AG04449 (cell line): ENCODE measurements at regions of chr7 and their contacts with region 1.

Region 1: GRCh38 chr7:114865564-114865963 is 56.3 kb upstream of the MDFIC start:
- DNase-seq: no peak
- H3K4me3 ChIP-seq: no peak overlapping the region
- CTCF ChIP-seq: peak; percentile 77

Region 2: DNA sequence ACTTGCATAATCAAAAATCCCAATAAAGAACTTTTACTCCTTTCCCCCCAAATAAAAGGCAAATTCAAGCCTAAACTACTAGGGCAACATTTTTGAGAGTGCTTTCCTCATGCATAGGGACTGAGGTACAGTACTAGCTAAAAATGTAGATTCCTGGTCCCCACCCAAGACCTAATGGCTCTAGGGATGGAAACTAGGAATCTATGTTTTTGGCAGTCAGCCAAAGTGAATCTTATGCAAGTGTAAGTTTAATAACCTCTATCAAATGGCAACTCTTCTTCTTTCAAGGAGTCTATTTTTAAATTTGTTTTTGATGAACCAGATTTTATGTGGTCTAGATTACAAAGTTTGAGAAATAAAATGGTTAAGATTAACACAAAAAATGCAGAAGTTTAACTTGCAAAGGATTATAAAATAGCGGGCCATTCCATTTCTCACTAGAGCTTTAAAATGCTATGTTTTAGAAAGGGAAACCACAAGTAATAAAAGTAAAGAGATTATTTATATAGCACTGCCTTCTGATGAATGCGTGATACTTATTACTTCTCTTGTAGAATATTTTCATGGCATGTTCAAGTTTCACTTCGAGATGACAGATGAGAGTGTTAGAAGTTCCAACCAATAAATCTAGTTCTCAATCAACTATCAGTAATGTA is 14.0 kb before region 1 on chr7:
- CTCF ChIA-PET with region 1: interaction called, 12 read pairs
- POLR2A ChIA-PET with region 1: no interaction called
- DNase-seq: no peak
- H3K4me3 ChIP-seq: no peak overlapping the region
- CTCF ChIP-seq: no peak

Region 3: DNA sequence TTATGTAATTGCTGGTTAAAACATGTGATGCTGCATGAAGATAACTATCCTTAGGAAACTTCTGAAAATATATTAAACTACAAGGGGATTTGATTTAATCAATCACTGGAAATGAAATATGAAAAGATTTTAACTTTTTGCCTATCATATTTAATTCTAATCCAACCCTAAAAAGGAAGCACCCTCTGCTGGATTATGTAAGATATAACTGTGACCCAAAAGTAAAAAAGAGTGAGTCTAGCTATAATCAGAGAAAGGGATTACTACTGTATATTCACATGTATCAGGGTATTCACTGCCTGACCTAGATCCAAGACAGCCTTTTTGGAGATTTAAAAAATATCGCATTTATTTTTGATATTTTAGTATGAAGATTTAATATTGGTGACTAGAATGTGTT is 351.8 kb after region 1 on chr7:
- CTCF ChIA-PET with region 1: interaction called, 45 read pairs
- POLR2A ChIA-PET with region 1: no interaction called
- DNase-seq: no peak
- H3K4me3 ChIP-seq: no peak overlapping the region
- CTCF ChIP-seq: no peak

Region 4: GRCh38 chr7:115679976-115680375 is 814.4 kb after region 1 on chr7:
- CTCF ChIA-PET with region 1: interaction called, 24 read pairs
- POLR2A ChIA-PET with region 1: no interaction called
- DNase-seq: no peak
- H3K4me3 ChIP-seq: no peak overlapping the region
- CTCF ChIP-seq: peak; percentile 64

Region 5: GRCh38 chr7:115851291-115851690 is 985.7 kb after region 1 on chr7:
- CTCF ChIA-PET with region 1: interaction called, 19 read pairs
- POLR2A ChIA-PET with region 1: no interaction called
- DNase-seq: no peak
- H3K4me3 ChIP-seq: no peak overlapping the region
- CTCF ChIP-seq: peak; percentile 8